ENCODE measurements at regions of chr6 and their contacts with region 1.

Region 1: DNA sequence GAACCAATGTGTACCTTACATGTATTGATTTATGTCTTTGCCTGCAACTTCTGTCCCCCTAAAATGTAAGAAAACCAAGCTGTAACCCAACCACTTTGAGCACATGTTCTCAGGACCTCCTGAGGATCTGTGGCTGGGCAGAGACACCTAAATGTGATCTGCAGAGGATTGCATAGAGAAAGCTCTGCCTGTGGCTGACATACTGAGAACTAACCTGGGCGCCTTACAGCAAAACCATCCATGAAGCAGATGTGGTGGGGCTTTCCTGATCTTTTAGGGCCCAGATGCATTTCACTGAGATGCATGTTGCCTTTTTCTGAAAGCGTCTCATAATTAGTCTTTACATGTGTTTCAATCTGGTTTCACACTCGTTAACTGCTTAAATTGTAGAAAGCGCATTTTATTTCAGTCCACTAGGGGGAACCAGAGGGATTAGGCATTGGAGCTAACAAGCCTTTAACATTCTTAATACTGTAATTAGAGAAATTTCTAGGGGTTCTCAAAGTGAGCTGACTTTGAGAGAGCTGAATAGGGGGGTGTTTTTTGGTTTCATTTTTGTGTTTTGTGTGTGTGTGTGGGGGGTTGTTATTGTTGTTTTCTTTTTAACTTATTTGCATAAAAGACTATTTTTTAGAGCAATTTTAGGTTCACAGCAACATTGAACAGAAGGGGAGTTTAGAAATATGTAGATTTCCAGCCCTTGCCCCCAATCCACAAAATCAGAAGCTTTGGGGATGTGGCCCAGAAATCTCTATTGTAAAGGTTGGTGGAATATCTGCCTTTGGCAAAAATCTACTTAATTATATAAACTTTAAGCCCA is 50.9 kb upstream of the FAM184A start:
- DNase-seq: peak; percentile 20 to 68
- H3K4me3 ChIP-seq: 0 out of 2 replicates have a peak overlapping the region, but pooled peaks have one; percentile 2
- H3K27ac ChIP-seq: peak overlapping the region; percentile 55
- H3K4me1 ChIP-seq: peaks cover 35% of the 10 kb centered on the region
- H3K27me3 ChIP-seq: no peaks in the 10 kb centered on the region
- CTCF ChIP-seq: peak; percentile 96

Region 2: DNA sequence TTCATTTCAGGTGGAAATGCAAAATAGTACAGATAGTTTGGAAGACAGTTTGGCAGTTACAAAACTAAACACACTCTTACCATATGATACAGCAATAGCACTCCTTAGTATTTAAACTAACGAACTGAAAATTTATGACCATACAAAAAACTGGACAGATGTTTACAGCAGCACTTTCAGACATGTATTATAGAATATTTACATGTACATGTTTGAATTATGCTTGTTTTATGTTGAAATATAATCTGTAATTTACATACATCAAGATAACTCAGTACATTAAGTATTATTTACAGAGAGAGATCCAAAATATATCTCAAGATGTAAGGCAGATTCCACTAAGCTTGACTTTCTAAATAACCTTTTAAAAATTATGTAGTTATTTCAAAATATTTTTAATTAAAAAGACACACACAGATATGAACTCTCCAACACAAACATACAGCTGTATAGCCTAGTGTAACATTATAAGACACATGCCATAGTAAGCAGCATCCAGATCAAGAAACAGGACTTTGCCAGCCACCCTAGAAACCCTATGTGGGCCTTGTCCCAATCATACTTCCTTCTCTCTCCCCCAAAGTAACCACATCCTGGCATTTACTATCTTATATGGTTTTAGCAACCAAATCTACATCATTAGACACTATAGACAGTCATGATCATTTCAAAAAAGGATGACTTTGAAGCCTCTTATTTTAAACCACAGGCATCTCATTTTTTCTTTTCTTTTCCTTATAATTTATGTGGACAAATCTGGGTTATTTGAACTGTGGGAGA is 138.0 kb after region 1 on chr6:
- CTCF ChIA-PET with region 1: no interaction called
- POLR2A ChIA-PET with region 1: no interaction called
- intact Hi-C with region 1: loop called (anchors 10 kb)
- DNase-seq: peak in 1 of 2 experiments; percentile 25
- H3K4me3 ChIP-seq: no peak overlapping the region
- H3K27ac ChIP-seq: no peak overlapping the region
- H3K4me1 ChIP-seq: no peaks in the 10 kb centered on the region
- H3K27me3 ChIP-seq: no peaks in the 10 kb centered on the region
- CTCF ChIP-seq: no peak

Measured in PC-9 (cell line).